Sigmoid colon (tissue), 7 donors: ENCODE measurements at regions of chr1 and their contacts with region 1.

Region 1: DNA sequence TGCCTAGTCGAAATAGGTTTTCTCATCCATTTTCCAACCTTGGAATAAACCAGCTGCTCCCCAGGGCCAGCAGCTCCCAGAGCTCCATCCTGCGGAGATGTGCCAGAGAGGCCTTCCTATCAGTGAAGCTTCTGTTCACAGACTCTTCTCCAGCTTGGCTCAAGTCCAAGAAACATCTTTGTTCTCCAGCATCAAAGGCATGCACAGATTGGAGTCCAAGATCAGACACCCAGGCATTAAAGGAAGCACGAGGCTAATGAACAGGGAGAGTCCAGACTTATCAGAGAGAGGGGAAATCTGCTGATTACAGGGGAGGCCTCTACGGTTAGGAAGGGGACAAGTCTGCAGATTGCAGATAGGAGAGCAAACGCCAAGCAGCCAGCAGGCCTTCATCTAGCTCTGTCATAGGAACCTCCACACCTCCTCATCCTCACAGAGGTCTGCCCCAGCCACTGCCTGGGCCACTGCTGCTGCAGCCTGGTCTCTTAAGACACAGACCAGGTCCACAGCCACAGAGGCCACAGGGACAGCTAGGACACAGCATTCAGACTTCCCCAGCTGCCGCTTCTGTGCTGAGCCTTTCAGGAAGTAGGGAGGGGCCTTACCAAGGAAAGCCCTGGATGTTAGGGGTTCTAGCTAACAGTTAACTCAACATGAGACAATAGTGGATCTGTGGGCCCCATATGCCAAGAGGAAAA is 3.4 kb downstream of the PRR9 start:
- DNase-seq: no peak
- H3K4me3 ChIP-seq: no peak overlapping the region
- H3K27ac ChIP-seq: no peak overlapping the region
- H3K4me1 ChIP-seq: no peaks in the 10 kb centered on the region
- H3K27me3 ChIP-seq: no peaks in the 10 kb centered on the region
- CTCF ChIP-seq: no peak
- EP300 ChIP-seq: no peak
- POLR2A ChIP-seq: no peak

Region 2: GRCh38 chr1:152654110-152654509 is 566.6 kb before region 1 on chr1:
- intact Hi-C with region 1: loop called (anchors 10 kb)
- DNase-seq: no peak
- H3K4me3 ChIP-seq: no peak overlapping the region
- H3K27ac ChIP-seq: no peak overlapping the region
- H3K4me1 ChIP-seq: no peaks in the 10 kb centered on the region
- H3K27me3 ChIP-seq: no peaks in the 10 kb centered on the region
- CTCF ChIP-seq: peak in 1 of 4 experiments; percentile 38
- EP300 ChIP-seq: no peak
- POLR2A ChIP-seq: no peak

Region 3: GRCh38 chr1:152869808-152870419 is 350.8 kb before region 1 on chr1:
- intact Hi-C with region 1: loop called (anchors 5 kb)
- DNase-seq: peak; percentile 63
- H3K4me3 ChIP-seq: no peak overlapping the region
- H3K27ac ChIP-seq: no peak overlapping the region
- H3K4me1 ChIP-seq: no peaks in the 10 kb centered on the region
- H3K27me3 ChIP-seq: no peaks in the 10 kb centered on the region
- CTCF ChIP-seq: peak in 3 of 4 experiments; percentile 42 to 63 (median 52)
- EP300 ChIP-seq: no peak
- POLR2A ChIP-seq: no peak